PC-9 (cell line): ENCODE measurements at regions of chr1 and their contacts with region 1.

Region 1: GRCh38 chr1:226814751-226815496 is 55.5 kb upstream of the PSEN2 start:
- DNase-seq: peak; percentile 98 to 99
- H3K4me3 ChIP-seq: peak overlapping the region; percentile 25; the same call in 1 of the 2 replicates
- H3K27ac ChIP-seq: peak overlapping the region; percentile 97
- H3K4me1 ChIP-seq: peaks cover 56% of the 10 kb centered on the region
- H3K27me3 ChIP-seq: no peaks in the 10 kb centered on the region
- CTCF ChIP-seq: no peak

Region 2: DNA sequence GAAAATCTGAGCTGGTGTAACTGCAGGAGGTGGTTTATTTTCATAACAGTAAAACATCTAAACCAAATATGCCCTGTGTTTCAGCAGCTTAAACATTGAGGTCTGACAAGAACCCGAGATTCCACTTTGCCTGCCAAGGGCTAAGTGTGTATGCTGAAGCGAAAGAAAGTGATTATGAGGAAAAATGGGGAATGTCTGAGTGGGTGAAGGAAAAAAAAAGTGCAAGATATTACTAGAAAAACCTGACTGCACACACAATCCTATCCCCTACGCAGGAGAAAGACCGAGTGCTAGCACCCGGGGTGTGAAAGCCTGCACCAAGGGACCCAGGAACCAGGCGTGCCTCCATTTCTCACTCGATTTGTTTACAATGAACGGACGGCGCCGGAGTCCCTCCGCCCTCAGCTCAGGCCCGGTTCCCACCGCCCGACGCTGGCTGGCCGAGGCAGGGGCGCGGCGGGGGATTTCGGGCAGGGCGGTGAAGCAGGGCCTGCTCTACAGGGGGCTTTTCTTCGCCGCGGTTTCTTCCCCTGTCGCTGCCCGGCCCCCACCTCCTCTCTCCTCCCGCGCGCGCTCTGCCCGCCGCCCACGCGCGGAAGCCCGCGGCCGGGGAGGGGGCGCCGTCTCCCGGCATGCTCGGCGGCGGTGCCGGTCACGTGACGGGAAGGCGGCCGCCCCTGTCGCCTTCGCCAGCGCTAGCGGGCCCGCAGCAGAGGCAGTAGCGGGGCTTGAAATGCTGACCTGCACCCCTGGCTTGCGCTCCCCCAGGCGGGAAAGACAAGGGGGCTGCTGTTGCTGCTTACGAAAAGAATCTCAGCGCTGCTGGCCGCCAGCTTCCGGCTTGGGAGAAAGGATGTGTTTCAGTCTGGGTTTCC is 111.7 kb before region 1 on chr1:
- CTCF ChIA-PET with region 1: no interaction called
- POLR2A ChIA-PET with region 1: no interaction called
- intact Hi-C with region 1: loop called (anchors 5 kb)
- DNase-seq: peak in 1 of 2 experiments; percentile 66
- H3K4me3 ChIP-seq: peak overlapping the region; percentile 83
- H3K27ac ChIP-seq: peak overlapping the region; percentile 62
- H3K4me1 ChIP-seq: peaks cover 14% of the 10 kb centered on the region
- H3K27me3 ChIP-seq: no peaks in the 10 kb centered on the region
- CTCF ChIP-seq: no peak